ENCODE measurements at regions of chr19 and their contacts with region 1.

Region 1: DNA sequence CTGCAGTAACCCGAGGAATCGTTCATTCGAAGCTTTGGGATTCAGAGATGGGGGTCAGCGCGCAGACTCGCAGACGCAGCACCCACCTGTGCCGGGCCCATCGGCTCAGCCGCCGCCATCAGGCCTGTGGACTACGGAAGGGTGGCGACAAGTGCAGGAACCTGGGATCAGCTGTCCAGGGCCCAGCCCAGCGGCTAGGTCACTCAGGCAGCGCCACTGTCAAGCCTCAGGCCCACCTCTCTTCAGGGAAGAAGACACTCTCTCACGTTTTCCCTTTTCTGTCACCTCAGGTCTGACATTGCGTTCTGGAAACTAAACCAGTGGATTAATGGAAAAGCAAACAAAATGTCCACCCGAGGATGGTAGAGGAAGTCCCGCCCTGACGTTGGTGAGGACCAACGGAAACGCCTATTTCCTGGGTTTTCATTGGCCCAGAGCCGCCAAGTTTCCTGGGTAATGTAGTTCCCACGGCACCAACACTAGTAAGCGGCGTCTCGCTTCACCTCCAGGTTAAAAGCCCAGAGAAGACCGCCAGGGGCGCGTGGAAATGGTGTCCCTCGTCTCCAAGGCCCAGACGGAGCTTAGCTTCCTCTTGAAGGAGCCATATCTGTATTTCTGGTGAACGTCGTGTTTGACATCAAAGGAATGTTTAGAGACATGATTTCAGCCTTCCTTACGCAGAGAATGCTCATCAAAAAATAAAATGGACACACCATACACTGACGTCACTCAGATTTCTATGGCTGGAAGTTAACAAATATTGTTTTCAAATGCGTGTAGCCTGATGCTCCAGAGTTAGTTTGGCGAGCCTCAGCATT is at the start of gene ZNF772:
- DNase-seq: peak; percentile 92
- ATAC-seq: peak; percentile 99
- total RNA-seq, gene ZNF772: 18.3 TPM

Region 2: GRCh38 chr19:57719901-57720519 is 242.6 kb after region 1 on chr19:
- intact Hi-C with region 1: loop called (anchors 10 kb)
- DNase-seq: no peak
- ATAC-seq: no peak